ENCODE measurements at regions of chr2 and their contacts with region 1.

Region 1: DNA sequence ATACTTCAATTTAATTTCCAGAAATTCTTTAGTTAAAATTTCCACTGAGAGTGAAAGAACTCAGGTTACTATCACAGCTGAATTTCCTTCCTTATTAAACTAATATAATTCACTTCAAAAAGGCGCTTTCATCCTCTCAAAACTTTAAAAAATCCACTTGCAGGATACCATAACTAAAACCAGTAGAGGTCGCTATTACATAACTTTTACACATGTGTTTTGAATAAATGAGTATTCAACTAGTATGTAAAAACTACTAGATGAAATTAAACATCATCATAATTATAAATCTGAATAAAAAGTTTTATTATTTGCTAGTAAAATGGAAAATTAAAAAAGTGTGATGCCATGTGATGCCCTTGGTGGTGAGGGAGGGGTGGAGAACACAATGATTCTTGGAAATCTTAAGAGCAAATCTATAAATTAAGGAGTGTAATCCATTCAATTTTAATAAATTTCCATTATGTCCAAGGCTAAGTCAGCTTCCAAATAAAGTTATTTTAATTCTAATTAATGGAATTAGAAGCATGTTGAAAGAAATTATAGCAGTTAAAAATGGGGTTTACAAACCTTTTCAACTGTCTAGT is 61.4 kb downstream of the SOS1 start:
- DNase-seq: peak in 2 of 4 donors; percentile 24 to 51
- ATAC-seq: peak; percentile 58
- H3K4me3 ChIP-seq: no peak overlapping the region
- H3K27ac ChIP-seq: no peak overlapping the region
- H3K4me1 ChIP-seq: no peaks in the 10 kb centered on the region
- H3K27me3 ChIP-seq: no peaks in the 10 kb centered on the region
- CTCF ChIP-seq: peak; percentile 70 to 74

Region 2: GRCh38 chr2:38771632-38772031 is 287.8 kb before region 1 on chr2:
- intact Hi-C with region 1: no loop called
- DNase-seq: no peak
- ATAC-seq: no peak
- H3K4me3 ChIP-seq: no peak overlapping the region
- H3K27ac ChIP-seq: no peak overlapping the region
- H3K4me1 ChIP-seq: no peaks in the 10 kb centered on the region
- H3K27me3 ChIP-seq: peaks cover 0 to 1% of the 10 kb centered on the region in 2 donors
- CTCF ChIP-seq: no peak

Region 3: GRCh38 chr2:38892819-38893218 is 166.6 kb before region 1 on chr2:
- intact Hi-C with region 1: no loop called
- DNase-seq: no peak
- ATAC-seq: no peak
- H3K4me3 ChIP-seq: no peak overlapping the region
- H3K27ac ChIP-seq: no peak overlapping the region
- H3K4me1 ChIP-seq: no peaks in the 10 kb centered on the region
- H3K27me3 ChIP-seq: no peaks in the 10 kb centered on the region
- CTCF ChIP-seq: no peak

Region 4: GRCh38 chr2:39008665-39009064 is 50.8 kb before region 1 on chr2:
- intact Hi-C with region 1: no loop called
- DNase-seq: no peak
- ATAC-seq: no peak
- H3K4me3 ChIP-seq: no peak overlapping the region
- H3K27ac ChIP-seq: no peak overlapping the region
- H3K4me1 ChIP-seq: no peaks in the 10 kb centered on the region
- H3K27me3 ChIP-seq: no peaks in the 10 kb centered on the region
- CTCF ChIP-seq: no peak

Region 5: DNA sequence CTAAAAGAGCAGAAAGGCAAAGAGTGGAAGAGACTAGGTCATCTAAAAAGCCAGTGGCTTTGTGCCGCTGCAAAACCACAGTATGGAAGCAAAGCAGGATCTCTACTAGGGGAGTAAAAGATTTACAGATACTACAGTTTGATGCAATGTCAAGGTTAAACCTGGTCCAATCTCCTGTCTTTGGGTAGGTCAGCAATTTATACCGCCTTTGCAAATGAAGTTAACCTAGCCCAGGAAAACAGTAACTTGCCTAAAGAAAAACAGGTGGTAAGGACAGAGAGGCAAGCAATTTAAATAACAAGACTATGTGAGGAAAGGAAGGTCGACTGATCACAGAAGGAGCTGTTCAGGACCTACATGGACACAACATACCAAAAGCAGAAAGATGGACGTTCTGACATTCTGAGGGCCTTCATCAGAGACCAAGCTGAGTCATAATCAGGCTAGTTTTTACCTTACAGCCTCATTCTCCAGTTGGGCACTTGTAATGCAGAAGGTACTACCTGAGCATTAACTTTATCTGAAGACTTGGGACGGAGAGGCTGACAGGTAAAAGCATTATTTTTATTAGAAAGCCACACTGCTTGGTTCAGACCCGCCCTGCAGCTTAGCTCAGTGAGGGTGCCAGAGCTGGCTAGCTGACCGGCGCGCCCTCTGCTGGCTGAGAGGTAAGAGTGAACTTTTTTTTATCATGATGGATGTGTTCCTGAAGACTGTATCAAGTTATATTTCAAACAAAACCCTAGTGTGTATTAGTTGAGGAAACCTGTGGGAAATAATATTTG is 168.4 kb after region 1 on chr2:
- intact Hi-C with region 1: loop called in 1 of 2 experiments (anchors 5 kb)
- DNase-seq: peak; percentile 76 to 95 (median 84)
- ATAC-seq: peak; percentile 96
- H3K4me3 ChIP-seq: peak overlapping the region in 1 of 2 donors; percentile 6
- H3K27ac ChIP-seq: no peak overlapping the region
- H3K4me1 ChIP-seq: peaks cover 0 to 17% of the 10 kb centered on the region in 2 donors
- H3K27me3 ChIP-seq: no peaks in the 10 kb centered on the region
- CTCF ChIP-seq: peak; percentile 60 to 82

Region 6: GRCh38 chr2:39275016-39275415 is 215.6 kb after region 1 on chr2:
- intact Hi-C with region 1: no loop called
- DNase-seq: no peak
- ATAC-seq: peak; percentile 74
- H3K4me3 ChIP-seq: no peak overlapping the region
- H3K27ac ChIP-seq: no peak overlapping the region
- H3K4me1 ChIP-seq: no peaks in the 10 kb centered on the region
- H3K27me3 ChIP-seq: no peaks in the 10 kb centered on the region
- CTCF ChIP-seq: no peak